ENCODE measurements at regions of chr6 and their contacts with region 1.

Region 1: DNA sequence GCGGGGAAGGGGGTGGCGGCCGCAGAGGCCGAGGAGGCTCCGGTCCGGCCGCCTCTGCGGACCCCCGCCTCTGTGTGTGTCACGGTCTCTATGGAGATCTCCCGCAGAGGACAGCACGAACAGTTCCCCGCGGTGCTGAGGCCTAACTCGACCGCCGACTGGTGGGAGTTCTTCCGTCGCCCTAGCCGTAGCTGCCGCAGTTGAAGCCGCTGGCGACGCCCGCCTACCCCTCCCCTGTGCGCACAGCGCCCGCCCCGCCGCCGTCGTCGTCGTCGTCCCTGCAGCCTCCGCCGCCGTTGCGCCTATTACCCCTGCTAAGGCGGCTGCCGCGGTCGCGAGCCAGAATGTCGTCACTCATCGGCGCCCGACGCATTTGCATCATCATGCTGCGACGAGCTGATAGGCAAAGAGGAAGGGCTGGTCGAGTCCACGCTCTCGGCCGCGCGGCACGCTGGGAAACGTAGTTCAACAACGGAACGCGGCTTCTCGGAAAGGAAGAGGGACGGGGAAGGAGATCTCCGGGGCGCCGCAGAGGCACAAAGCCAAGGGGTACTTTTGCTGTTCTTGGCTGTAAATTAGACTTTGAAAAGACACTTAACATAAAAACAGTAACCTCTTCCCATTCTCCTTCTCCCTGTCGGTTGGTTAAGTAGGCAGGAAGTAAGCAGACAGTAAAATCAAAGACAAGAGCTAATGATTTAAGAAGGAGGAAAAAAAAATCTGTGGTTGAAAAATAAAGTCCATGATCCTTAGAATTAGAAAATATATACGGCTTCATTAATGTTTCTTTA is at the start of gene NUP153:
- DNase-seq: peak; percentile 100
- H3K4me3 Mint-ChIP-seq: peak within 1 kb of the TSS; percentile 93
- H3K27ac Mint-ChIP-seq: peak within 1 kb of the TSS; percentile 99
- H3K4me1 Mint-ChIP-seq: peaks cover 28% of the 10 kb centered on the region
- H3K27me3 Mint-ChIP-seq: no peaks in the 10 kb centered on the region
- total RNA-seq, gene NUP153: 65.3 to 67.2 TPM

Region 2: GRCh38 chr6:16420715-16421461 is 1285.9 kb before region 1 on chr6:
- CTCF ChIA-PET with region 1: no interaction called
- intact Hi-C with region 1: loop called (anchors 1 kb)
- DNase-seq: peak; percentile 66
- H3K4me3 Mint-ChIP-seq: peak overlapping the region; percentile 45
- H3K27ac Mint-ChIP-seq: peak overlapping the region; percentile 95
- H3K4me1 Mint-ChIP-seq: peaks cover 42% of the 10 kb centered on the region
- H3K27me3 Mint-ChIP-seq: no peaks in the 10 kb centered on the region

Region 3: GRCh38 chr6:17536586-17536985 is 170.2 kb before region 1 on chr6:
- CTCF ChIA-PET with region 1: no interaction called
- intact Hi-C with region 1: loop called (anchors 5 kb)
- DNase-seq: peak; percentile 68
- H3K4me3 Mint-ChIP-seq: no peak overlapping the region
- H3K27ac Mint-ChIP-seq: no peak overlapping the region
- H3K4me1 Mint-ChIP-seq: peaks cover 5% of the 10 kb centered on the region
- H3K27me3 Mint-ChIP-seq: peaks cover 21% of the 10 kb centered on the region

Region 4: DNA sequence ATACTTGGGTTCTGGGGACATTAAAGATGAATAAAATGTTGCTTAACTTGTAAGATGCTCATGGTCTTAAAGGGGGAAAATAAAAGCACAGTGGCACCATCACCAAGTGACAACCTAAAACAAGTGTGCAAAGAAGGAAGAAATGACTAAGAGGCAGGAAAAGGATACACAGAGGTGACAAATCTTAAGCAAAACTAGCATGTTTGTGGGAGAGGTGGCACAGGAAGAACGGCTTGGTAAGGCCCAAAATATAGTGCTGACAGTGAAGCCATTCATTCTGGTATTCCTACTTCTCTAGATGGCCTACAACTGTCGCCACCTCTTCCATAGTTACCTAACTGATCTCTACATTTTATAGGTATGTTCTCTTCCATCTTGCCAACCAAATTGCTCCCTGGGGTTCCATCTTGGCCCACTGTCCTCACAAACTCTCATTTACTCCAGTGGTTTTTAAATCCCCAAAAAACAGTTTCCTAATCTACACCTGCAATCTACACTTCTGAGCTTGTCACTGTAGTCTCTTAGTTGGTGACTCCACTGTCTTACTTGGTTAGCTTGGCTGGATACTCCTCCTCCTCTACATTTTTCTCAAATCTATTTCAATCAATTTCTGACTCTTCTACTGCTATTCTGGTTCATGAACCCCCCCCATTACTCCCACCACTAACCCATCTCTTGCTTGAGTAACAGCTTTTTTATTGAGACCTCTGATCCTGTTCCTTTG is 73.1 kb before region 1 on chr6:
- CTCF ChIA-PET with region 1: interaction called, 3 read pairs
- intact Hi-C with region 1: loop called (anchors 2 kb)
- DNase-seq: peak; percentile 50
- H3K4me3 Mint-ChIP-seq: no peak overlapping the region
- H3K27ac Mint-ChIP-seq: peak overlapping the region; percentile 76
- H3K4me1 Mint-ChIP-seq: peaks cover 47% of the 10 kb centered on the region
- H3K27me3 Mint-ChIP-seq: no peaks in the 10 kb centered on the region

Region 5: GRCh38 chr6:17808609-17809008 is 101.8 kb after region 1 on chr6:
- CTCF ChIA-PET with region 1: interaction called, 7 read pairs
- intact Hi-C with region 1: loop called (anchors 1 kb)
- DNase-seq: no peak
- H3K4me3 Mint-ChIP-seq: no peak overlapping the region
- H3K27ac Mint-ChIP-seq: no peak overlapping the region
- H3K4me1 Mint-ChIP-seq: no peaks in the 10 kb centered on the region
- H3K27me3 Mint-ChIP-seq: peaks cover 7% of the 10 kb centered on the region

Region 6: DNA sequence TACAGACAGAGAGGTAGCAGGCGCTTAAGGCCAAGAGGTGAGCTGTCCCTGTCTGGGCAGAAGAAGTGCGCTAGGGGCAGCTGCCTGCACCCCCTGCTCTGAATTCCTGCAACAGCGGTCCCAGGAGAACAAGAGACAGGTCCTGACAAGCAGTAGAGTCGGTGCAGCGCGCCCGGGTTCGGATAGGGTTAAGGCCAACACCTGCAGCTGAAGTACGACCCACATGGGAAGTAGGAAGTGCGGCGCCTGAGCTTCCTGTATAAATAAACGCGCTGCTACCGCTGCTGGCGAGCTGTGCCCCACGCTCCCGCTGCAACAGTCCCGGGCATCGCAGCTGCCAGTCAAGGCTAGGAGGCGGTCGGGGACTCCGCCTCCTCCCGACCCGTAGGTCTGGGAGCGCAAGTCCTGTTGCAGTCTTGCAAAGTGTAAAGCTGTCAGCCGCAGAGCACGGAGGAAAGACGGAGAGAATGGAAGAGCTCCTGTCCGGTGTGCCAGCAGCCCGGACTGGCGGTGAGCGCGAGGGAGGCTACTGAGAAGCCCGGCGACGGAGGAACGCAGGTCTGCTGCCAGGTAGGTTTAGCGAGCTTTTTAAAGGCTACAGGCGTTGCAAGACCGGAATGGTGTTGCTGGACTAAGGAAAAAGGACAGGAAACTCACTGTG is 680.4 kb after region 1 on chr6 and contains the start of gene RNF144B:
- CTCF ChIA-PET with region 1: no interaction called
- intact Hi-C with region 1: loop called (anchors 2 kb)
- DNase-seq: peak; percentile 77
- H3K4me3 Mint-ChIP-seq: peak within 1 kb of the TSS; percentile 86
- H3K27ac Mint-ChIP-seq: peak within 1 kb of the TSS; percentile 32
- H3K4me1 Mint-ChIP-seq: peaks cover 25% of the 10 kb centered on the region
- H3K27me3 Mint-ChIP-seq: no peaks in the 10 kb centered on the region
- total RNA-seq, gene RNF144B: 1.5 to 3.2 TPM

Measured in activated naive CD4-positive, alpha-beta T cell treated with anti-CD3 and anti-CD28 coated beads for 36 hours (primary cell).